Activated CD4-positive, alpha-beta T cell treated with anti-CD3 and anti-CD28 coated beads for 36 hours (primary cell): ENCODE measurements at regions of chr21 and their contacts with region 1.

Region 1: GRCh38 chr21:36156339-36156814 is 247 bp upstream of the DOP1B start:
- DNase-seq: peak; percentile 100
- ATAC-seq: peak; percentile 93
- H3K4me3 Mint-ChIP-seq: peak overlapping the region; percentile 77
- H3K27ac Mint-ChIP-seq: no peak overlapping the region
- H3K4me1 Mint-ChIP-seq: peaks cover 23% of the 10 kb centered on the region
- H3K27me3 Mint-ChIP-seq: no peaks in the 10 kb centered on the region

Region 2: DNA sequence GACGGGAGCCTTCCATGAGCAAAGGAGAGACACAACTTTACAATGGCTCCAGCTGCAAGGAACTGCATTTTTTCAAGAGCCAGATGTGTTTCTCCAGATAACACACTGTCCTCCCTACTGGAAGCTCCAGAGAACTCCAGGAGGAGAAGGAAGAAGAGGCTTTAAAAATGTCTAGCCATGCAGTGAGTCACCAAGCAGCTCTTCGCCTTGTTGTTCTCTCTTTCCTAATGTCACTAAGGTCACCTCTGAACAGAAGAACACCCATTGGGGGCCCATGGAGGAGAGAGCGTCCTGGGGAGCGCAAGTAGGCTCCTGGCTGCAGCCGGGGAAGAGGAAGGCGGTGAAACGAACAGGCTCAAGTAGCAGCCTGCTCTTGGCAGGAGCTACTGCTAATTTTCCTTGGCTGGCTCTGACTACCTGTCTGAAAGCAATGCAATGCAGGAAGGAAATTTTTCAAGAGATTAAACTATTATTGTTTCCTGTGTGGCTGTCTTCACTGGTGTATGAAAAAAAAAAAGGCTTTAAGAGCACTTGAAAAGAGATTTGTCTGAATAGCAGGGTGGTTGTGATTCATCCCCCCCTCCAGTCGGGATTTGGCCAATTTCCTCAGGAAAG is 417.9 kb before region 1 on chr21:
- CTCF ChIA-PET with region 1: no interaction called
- POLR2A ChIA-PET with region 1: no interaction called
- intact Hi-C with region 1: no loop called
- DNase-seq: no peak
- ATAC-seq: no peak
- H3K4me3 Mint-ChIP-seq: no peak overlapping the region
- H3K27ac Mint-ChIP-seq: no peak overlapping the region
- H3K4me1 Mint-ChIP-seq: no peaks in the 10 kb centered on the region
- H3K27me3 Mint-ChIP-seq: peaks cover 10% of the 10 kb centered on the region

Region 3: DNA sequence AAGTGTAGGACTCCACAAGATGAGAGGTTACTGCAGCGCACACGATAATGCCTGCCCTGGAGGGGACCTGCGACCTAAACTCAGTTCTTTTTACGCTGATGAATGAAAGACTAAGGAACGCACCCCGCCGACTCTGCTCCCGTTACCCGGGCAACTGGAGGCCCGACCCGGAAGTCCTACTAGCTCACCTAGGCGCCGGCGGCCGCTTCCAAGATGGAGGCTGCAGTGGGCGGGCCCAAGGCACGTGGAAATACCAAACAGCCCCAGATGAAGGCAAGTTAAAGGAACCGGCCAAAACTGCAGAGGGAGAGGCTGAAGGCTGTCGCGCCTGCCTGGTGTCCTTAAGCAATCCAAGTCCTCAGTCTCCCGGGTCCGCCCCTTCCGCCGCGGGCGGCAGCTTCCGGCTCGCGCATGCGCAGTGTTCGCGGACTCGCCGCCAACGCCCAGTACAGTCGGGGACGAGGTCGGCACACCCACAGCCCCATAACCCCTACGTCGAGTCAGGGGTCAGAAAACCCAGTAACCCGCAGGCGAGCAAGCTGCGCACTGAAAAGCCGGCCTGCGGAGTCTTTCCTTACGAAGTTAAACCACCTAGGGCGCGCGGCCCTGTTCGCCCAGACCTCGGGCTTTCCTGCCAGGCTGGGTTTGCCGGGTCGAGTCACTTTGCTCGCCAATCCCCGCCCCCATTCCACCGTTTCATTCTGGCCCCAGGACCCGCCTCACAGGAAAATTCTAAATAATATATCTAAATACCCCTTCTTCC is 96.0 kb before region 1 on chr21 and contains the start of gene SETD4:
- CTCF ChIA-PET with region 1: interaction called, 3 read pairs
- POLR2A ChIA-PET with region 1: no interaction called
- intact Hi-C with region 1: loop called (anchors 1 kb)
- DNase-seq: peak; percentile 95
- ATAC-seq: peak; percentile 92
- H3K4me3 Mint-ChIP-seq: peak within 1 kb of the TSS; percentile 89
- H3K27ac Mint-ChIP-seq: peak within 1 kb of the TSS; percentile 92
- H3K4me1 Mint-ChIP-seq: peaks cover 15% of the 10 kb centered on the region
- H3K27me3 Mint-ChIP-seq: no peaks in the 10 kb centered on the region
- total RNA-seq, gene SETD4: 11.0 to 17.6 TPM

Region 4: GRCh38 chr21:36135391-36136102 is 20.8 kb before region 1 on chr21:
- CTCF ChIA-PET with region 1: interaction called, 5 read pairs
- POLR2A ChIA-PET with region 1: interaction called, 9 read pairs
- intact Hi-C with region 1: loop called (anchors 1 kb)
- DNase-seq: peak; percentile 78
- ATAC-seq: peak; percentile 73
- H3K4me3 Mint-ChIP-seq: peak overlapping the region; percentile 87
- H3K27ac Mint-ChIP-seq: peak overlapping the region; percentile 78
- H3K4me1 Mint-ChIP-seq: peaks cover 22% of the 10 kb centered on the region
- H3K27me3 Mint-ChIP-seq: no peaks in the 10 kb centered on the region

Region 5: GRCh38 chr21:36169436-36170128 is 13.2 kb after region 1 on chr21:
- CTCF ChIA-PET with region 1: interaction called, 6 read pairs
- POLR2A ChIA-PET with region 1: no interaction called
- intact Hi-C with region 1: loop called in 1 of 2 experiments (anchors 1 kb)
- DNase-seq: peak; percentile 31
- ATAC-seq: no peak
- H3K4me3 Mint-ChIP-seq: no peak overlapping the region
- H3K27ac Mint-ChIP-seq: no peak overlapping the region
- H3K4me1 Mint-ChIP-seq: peaks cover 4% of the 10 kb centered on the region
- H3K27me3 Mint-ChIP-seq: no peaks in the 10 kb centered on the region

Region 6: DNA sequence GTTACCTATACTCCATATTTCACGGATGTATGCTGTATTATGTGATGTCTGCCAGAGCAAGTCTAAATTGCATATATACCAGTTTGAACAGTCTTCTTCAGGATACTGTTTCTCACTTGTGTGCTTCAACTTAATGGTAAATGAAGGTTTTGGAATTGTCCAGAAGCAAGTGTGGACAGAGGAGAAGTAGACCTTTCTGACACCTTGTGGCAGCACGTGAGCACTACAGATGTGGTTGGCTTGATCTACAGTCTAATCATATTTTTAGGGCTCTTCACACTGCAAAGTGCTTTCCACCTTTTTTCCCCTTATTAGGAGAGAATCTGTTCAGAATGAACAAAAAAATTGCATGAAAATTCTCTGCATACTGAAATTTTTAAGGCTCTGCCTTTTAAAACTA is 174.5 kb after region 1 on chr21:
- CTCF ChIA-PET with region 1: no interaction called
- POLR2A ChIA-PET with region 1: no interaction called
- intact Hi-C with region 1: loop called (anchors 1 kb)
- DNase-seq: peak; percentile 67
- ATAC-seq: peak; percentile 92
- H3K4me3 Mint-ChIP-seq: no peak overlapping the region
- H3K27ac Mint-ChIP-seq: no peak overlapping the region
- H3K4me1 Mint-ChIP-seq: peaks cover 42% of the 10 kb centered on the region
- H3K27me3 Mint-ChIP-seq: no peaks in the 10 kb centered on the region

Region 7: DNA sequence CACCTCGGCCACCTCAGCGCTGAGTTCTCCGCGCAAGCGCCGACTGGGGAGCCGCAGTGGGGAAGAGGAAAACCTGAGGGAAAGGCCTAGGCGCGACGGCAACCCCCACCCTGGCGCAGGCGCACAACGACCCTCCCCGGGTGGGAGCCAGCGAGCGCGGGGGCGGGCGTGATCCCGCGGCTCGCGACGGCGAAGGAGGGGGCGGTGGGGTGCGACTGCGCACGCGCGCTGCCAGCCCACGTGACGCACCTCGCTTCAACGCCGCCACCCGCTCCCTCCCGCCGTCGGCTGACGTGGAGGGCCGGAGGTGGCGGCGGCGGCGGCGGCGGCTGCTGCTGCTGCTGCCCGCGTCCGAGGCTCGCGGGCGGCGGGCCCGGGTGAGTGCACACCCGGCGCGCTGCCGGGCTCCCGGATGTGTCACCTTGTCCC is 916.6 kb after region 1 on chr21 and contains the starts of genes PIGP and TTC3:
- CTCF ChIA-PET with region 1: no interaction called
- POLR2A ChIA-PET with region 1: no interaction called
- intact Hi-C with region 1: loop called in 1 of 2 experiments (anchors 1 kb)
- DNase-seq: peak; percentile 97
- ATAC-seq: peak; percentile 74
- H3K4me3 Mint-ChIP-seq: peak within 1 kb of the TSS; percentile 99
- H3K27ac Mint-ChIP-seq: peak within 1 kb of the TSS; percentile 92
- H3K4me1 Mint-ChIP-seq: peaks cover 48% of the 10 kb centered on the region
- H3K27me3 Mint-ChIP-seq: no peaks in the 10 kb centered on the region
- total RNA-seq, gene PIGP: 32.8 to 41.0 TPM
- total RNA-seq, gene TTC3: 65.1 to 78.9 TPM